ENCODE measurements at regions of chr1 and their contacts with region 1.

Region 1: GRCh38 chr1:23559136-23559984 is at the start of gene ID3:
- DNase-seq: peak; percentile 97
- H3K4me3 ChIP-seq: peak within 1 kb of the TSS; percentile 94
- H3K27ac ChIP-seq: peak within 1 kb of the TSS; percentile 97
- H3K4me1 ChIP-seq: peaks cover 68% of the 10 kb centered on the region
- CTCF ChIP-seq: 0 out of 2 replicates have a peak, but pooled peaks have one; percentile 13
- total RNA-seq, gene ID3: 1,286 and 1,658 TPM in 2 replicates

Region 2: DNA sequence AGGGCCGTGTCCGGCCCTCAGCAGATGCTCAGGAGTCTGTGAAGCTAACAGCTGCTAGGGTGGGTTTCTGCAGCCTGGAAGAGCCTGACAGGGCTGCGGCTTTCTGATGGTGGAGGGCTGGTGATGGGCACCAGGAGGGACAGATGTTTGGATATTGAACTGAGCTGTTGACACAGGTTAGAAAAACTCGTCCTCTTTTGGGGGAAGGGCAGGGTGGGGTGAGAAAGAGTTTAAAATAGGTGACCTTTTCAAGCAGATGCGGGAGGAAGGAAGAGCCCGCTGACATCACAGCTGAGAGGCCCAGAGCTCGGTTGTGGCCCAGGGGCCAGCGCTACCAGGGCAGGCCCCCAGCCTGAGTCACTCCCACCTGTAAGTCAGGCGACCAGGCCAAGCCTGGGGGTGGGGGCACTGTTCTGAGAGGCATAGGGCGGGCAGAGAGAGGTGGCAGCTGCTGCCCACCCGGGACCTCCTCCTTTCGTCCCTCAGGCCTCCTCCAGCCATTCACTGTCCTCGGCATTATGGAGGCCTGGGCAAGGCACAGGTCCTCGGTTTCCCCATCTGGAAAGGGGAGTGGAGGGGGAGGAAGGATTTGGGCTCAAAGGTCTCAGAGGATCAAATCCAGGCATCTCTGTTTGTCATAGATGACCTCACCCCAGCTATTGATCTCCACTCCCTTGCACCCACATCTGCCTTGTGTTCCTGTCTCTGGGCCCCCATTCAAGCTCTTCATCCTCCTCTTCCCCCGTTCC is 32.3 kb after region 1 on chr1:
- CTCF ChIA-PET with region 1: no interaction called
- POLR2A ChIA-PET with region 1: interaction called, 135 read pairs
- intact Hi-C with region 1: loop called (anchors 1 kb)
- DNase-seq: peak; percentile 90
- H3K4me3 ChIP-seq: peak overlapping the region; percentile 60
- H3K27ac ChIP-seq: peak overlapping the region; percentile 94
- H3K4me1 ChIP-seq: peaks cover 97% of the 10 kb centered on the region
- CTCF ChIP-seq: no peak

Region 3: DNA sequence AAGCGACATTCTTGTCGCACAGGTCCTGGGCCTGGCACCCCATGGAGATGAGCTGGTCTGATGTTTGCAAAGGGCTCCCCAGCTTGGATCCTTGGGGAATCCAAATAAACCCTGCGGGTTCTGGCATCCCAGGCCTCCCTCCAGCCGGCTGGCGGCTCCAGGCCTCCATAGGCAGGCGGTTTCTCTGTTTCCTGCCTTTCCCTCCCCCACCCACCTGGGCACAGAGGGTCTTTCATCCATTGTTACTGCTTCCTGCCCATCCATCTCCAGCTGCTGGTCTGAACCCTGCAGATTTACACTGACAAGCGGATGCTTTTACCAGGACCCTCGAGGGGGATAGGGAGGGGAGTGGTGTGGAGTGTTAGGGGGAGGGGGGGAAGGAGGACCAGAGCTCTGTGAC is 39.1 kb after region 1 on chr1:
- CTCF ChIA-PET with region 1: interaction called, 4 read pairs
- POLR2A ChIA-PET with region 1: interaction called, 135 read pairs
- intact Hi-C with region 1: no loop called
- DNase-seq: peak; percentile 78
- H3K4me3 ChIP-seq: peak overlapping the region; percentile 53
- H3K27ac ChIP-seq: peak overlapping the region; percentile 94
- H3K4me1 ChIP-seq: peaks cover 100% of the 10 kb centered on the region
- CTCF ChIP-seq: no peak

Region 4: DNA sequence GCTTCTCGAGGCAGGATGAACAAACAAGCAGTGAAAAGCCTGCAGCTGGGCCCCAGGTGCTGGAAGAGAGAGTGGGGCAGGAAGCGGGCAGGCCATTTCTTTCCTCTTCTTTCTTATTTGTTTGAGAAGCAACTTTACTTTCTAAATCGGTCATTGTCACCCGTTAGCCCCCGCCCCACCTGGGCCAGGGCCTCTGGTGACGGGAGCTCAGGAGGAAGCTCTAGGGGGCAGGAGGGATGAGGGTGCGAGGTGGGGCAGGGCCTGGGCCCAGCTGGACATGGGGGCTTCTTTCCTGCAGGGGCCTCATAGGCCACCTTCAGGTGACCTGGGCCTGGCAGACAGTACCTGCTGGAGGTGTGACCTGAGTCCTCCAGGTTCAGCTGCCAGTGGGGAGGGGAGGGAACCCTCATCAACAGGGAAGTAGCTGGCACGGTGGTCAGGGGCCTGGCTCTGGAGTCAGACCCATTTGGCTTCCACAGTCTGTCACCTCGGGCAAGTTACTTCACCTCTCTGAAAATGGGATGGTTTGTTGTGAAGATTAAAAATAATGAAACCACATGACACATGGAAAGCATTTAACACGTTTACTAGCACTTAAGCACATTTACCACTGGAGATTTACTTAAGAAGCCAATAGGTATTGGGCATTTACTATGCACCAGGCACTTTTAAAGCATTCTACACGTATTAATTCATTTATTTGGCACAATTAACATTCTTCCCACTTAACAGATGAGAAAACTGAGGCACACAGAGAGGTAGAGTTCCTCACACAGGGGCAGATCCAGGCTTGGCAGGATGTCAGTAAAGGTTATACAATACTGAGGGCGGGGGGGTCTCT is 54.1 kb after region 1 on chr1:
- CTCF ChIA-PET with region 1: no interaction called
- POLR2A ChIA-PET with region 1: interaction called, 50 read pairs
- intact Hi-C with region 1: loop called (anchors 1 kb)
- DNase-seq: peak; percentile 96
- H3K4me3 ChIP-seq: peak overlapping the region; percentile 64
- H3K27ac ChIP-seq: peak overlapping the region; percentile 99
- H3K4me1 ChIP-seq: peaks cover 98% of the 10 kb centered on the region
- CTCF ChIP-seq: peak; percentile 46; the same call in 1 of the 2 replicates

Region 5: GRCh38 chr1:23619299-23620188 is 60.2 kb after region 1 on chr1:
- CTCF ChIA-PET with region 1: no interaction called
- POLR2A ChIA-PET with region 1: interaction called, 50 read pairs
- intact Hi-C with region 1: no loop called
- DNase-seq: peak; percentile 97
- H3K4me3 ChIP-seq: peak overlapping the region; percentile 69
- H3K27ac ChIP-seq: peak overlapping the region; percentile 99
- H3K4me1 ChIP-seq: peaks cover 95% of the 10 kb centered on the region
- CTCF ChIP-seq: no peak

Region 6: GRCh38 chr1:23627069-23627735 is 67.8 kb after region 1 on chr1:
- CTCF ChIA-PET with region 1: interaction called, 3 read pairs
- POLR2A ChIA-PET with region 1: interaction called, 12 read pairs
- intact Hi-C with region 1: no loop called
- DNase-seq: peak; percentile 87
- H3K4me3 ChIP-seq: peak overlapping the region; percentile 70
- H3K27ac ChIP-seq: peak overlapping the region; percentile 99
- H3K4me1 ChIP-seq: peaks cover 97% of the 10 kb centered on the region
- CTCF ChIP-seq: no peak

Region 7: GRCh38 chr1:23634842-23635651 is 75.7 kb after region 1 on chr1:
- CTCF ChIA-PET with region 1: interaction called, 5 read pairs
- POLR2A ChIA-PET with region 1: interaction called, 12 read pairs
- intact Hi-C with region 1: loop called (anchors 2 kb)
- DNase-seq: peak; percentile 82
- H3K4me3 ChIP-seq: peak overlapping the region; percentile 52
- H3K27ac ChIP-seq: peak overlapping the region; percentile 85
- H3K4me1 ChIP-seq: peaks cover 92% of the 10 kb centered on the region
- CTCF ChIP-seq: peak; percentile 93